Colonic mucosa (tissue), 4 donors: ENCODE measurements at regions of chr6 and their contacts with region 1.

Region 1: DNA sequence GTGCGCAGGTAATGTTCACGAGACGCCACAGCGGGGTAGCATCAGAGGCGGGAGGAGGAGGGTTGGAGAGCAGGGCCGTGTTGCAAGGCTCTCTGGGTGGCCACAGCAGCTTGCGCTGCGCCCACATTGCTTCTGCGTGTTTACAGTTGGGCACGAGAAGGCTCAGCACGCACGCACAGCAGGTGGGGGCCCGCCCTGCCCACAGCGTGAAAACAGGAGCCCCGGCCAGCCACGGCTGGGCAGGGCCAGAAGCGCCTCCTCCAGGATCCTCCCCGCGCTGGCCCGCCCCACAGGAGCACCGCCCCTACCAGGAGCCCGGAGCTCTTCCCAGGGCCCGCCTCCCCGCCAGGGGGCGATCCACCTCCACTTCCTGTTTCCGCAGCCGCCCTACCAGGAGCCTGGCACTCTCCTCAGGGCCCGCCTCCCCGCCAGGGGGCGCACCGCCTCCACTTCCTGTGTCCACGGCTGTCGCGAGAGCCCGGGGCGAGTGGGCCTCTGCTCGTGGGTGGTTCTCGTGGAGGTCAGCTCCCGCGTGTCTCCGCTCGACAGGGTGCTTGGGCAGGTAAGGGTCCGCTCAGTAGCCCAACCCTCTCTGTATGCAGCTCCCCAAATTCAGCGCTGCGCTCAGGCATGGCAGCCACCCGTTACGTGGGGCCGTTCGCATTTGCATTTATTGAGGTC is at the start of gene FAM50B:
- DNase-seq: peak; percentile 96
- H3K4me3 ChIP-seq: peak within 1 kb of the TSS; percentile 46
- H3K27ac ChIP-seq: no peak within 1 kb of the TSS
- H3K4me1 ChIP-seq: no peaks in the 10 kb centered on the region
- H3K27me3 ChIP-seq: no peaks in the 10 kb centered on the region
- CTCF ChIP-seq: peak; percentile 91
- total RNA-seq, gene FAM50B: 3.2 to 3.9 TPM

Region 2: GRCh38 chr6:3939964-3940363 is 90.9 kb after region 1 on chr6:
- intact Hi-C with region 1: loop called (anchors 10 kb)
- DNase-seq: no peak
- H3K4me3 ChIP-seq: no peak overlapping the region
- H3K27ac ChIP-seq: no peak overlapping the region
- H3K4me1 ChIP-seq: no peaks in the 10 kb centered on the region
- H3K27me3 ChIP-seq: no peaks in the 10 kb centered on the region
- CTCF ChIP-seq: no peak

Region 3: GRCh38 chr6:3990692-3991501 is 141.8 kb after region 1 on chr6:
- intact Hi-C with region 1: loop called (anchors 10 kb)
- DNase-seq: peak; percentile 89
- H3K4me3 ChIP-seq: peak overlapping the region; percentile 21
- H3K27ac ChIP-seq: no peak overlapping the region
- H3K4me1 ChIP-seq: peaks cover 3% of the 10 kb centered on the region
- H3K27me3 ChIP-seq: no peaks in the 10 kb centered on the region
- CTCF ChIP-seq: peak; percentile 78

Region 4: DNA sequence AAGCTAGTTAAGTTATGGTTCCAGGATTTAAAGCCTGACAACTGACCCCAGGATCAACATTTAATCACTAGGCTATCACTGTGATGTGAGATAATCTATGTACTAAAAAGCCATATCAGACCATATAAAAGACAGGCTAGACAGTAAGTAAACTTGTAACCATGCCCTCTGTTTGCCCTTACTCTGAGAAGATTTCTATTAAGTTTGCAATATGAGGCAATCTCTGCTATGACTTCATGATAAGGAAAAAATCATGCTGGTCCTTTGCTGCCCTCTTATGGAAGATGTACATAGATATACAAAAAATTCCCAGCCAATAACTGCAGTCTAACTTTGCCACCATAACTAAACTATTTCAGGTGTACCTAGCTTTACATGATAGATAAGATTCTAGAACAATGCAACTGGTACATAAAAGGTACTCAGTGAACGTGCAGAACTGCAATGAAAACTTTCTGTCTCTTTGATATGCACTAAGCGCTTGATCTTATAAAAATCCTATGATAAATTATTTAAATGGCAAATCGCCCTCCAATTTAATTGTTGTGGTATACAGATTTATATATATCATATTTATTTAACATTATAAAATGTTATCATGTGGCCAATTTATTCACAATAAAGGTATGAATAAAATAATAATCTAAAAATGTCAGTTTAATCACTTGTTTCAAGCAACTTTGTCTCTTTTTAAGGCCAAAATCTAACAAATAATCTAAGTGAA is 159.4 kb after region 1 on chr6:
- intact Hi-C with region 1: no loop called
- DNase-seq: no peak
- H3K4me3 ChIP-seq: no peak overlapping the region
- H3K27ac ChIP-seq: no peak overlapping the region
- H3K4me1 ChIP-seq: peaks cover 7% of the 10 kb centered on the region
- H3K27me3 ChIP-seq: no peaks in the 10 kb centered on the region
- CTCF ChIP-seq: peak; percentile 39